ENCODE measurements at regions of chr5 and their contacts with region 1.

Region 1: GRCh38 chr5:142699184-142699720 is 13.4 kb upstream of the FGF1 start:
- DNase-seq: peak; percentile 87
- H3K4me3 ChIP-seq: no peak overlapping the region
- H3K27ac ChIP-seq: peak overlapping the region in 1 of 8 donors; percentile 9
- H3K4me1 ChIP-seq: peaks cover 8 to 35% (median 24%) of the 10 kb centered on the region in 6 donors
- H3K27me3 ChIP-seq: no peaks in the 10 kb centered on the region
- CTCF ChIP-seq: peak; percentile 80 to 95 (median 91)
- POLR2A ChIP-seq: no peak

Region 2: DNA sequence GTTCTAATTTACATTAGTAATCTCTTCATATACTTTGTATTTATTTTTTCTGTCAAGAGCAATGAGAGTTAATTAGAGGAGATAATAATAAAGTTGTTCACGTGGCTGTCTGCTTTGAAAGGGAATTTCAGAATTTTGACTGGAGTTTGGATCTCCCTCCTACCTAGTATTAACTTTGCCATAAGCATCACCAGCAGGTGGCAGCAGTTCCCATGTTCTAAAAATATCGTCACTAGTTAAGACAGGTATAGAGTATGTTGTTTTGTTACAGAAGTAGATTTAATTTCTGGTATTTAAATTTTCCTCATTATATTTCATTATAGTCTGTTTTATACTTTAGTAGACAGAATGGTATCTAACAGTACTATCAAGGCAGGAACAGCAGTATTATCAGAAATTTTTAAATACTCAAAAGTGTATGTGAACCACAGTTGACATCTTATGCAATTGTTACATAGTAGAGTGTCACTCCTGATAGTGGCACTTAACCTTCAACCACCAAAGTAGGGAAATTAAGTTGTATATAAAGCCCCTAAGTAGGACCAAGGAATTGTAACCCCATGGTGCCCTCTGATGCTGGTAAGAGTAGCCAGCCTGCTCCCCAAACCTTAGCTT is 706.8 kb before region 1 on chr5:
- intact Hi-C with region 1: loop called (anchors 10 kb)
- DNase-seq: no peak
- H3K4me3 ChIP-seq: no peak overlapping the region
- H3K27ac ChIP-seq: no peak overlapping the region
- H3K4me1 ChIP-seq: peaks cover 0 to 9% (median 0%) of the 10 kb centered on the region in 6 donors
- H3K27me3 ChIP-seq: no peaks in the 10 kb centered on the region
- CTCF ChIP-seq: peak; percentile 55 to 85 (median 74)
- POLR2A ChIP-seq: no peak

Region 3: DNA sequence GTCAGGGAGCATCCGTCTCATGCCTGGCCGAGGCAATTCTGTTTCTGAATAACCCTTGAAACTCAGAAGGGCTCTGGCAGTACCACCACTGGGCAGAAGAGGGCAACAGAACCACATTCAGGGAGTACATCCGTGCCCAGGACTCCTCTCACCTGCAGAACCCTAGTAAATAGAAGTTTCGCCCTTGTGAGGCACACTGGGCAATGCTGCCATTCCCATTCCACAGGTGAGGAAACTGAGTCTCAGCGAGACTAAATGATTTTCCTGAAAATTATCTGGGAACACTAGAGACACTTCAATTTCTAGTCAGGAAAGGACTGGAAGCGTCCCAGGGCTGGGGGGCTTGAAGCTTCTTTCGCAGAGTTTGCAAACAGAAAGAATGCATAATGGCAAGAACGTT is 88.1 kb before region 1 on chr5:
- intact Hi-C with region 1: loop called (anchors 5 kb)
- DNase-seq: no peak
- H3K4me3 ChIP-seq: no peak overlapping the region
- H3K27ac ChIP-seq: no peak overlapping the region
- H3K4me1 ChIP-seq: peaks cover 0 to 7% (median 0%) of the 10 kb centered on the region in 6 donors
- H3K27me3 ChIP-seq: peaks cover 0 to 17% (median 0%) of the 10 kb centered on the region in 7 donors
- CTCF ChIP-seq: peak; percentile 55 to 86 (median 77)
- POLR2A ChIP-seq: no peak

Region 4: DNA sequence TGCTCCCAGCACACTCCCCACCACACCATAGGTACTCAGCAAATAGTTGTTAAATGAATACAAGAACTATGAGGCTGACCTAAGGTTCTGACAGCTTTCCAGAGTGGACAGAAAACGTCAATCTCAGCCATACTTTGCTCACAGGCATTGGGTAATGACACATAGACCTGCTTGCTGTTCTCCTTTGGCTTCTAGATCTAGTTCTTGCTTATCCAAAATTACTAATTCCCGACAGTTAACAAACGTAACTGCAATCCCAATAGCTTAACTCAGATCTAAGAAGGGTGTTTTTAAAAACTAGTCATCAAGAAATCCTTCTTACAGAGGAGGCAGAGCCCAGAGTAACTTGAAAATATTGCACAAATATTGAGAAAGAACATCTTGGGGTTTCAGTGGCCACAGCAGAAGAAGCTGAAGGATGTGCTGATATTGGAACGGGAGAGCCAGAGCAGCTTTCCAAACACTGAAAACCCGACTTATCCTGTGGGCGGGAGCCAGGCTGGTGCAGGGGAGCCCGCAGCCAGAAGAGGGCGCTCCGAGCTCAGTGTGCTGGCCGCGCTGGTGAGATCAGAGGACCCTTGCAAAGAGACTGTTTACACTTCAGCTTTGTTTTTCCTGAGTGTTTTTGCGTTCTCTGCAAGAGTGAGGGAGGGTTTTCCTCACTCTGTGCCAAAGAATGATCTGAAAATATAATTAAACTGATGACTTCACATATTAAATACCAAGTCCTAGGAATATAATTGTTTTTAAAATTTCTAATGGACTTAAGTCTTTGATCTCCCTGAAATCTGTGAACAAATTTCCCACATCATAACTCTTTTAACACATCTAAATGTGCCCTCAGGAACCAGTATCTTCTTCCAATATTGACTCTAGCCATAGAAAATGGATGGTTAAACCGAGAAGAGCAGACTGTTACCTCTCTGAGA is 43.6 kb before region 1 on chr5:
- intact Hi-C with region 1: loop called (anchors 5 kb)
- DNase-seq: peak; percentile 89
- H3K4me3 ChIP-seq: no peak overlapping the region
- H3K27ac ChIP-seq: no peak overlapping the region
- H3K4me1 ChIP-seq: peaks cover 0 to 8% (median 3%) of the 10 kb centered on the region in 6 donors
- H3K27me3 ChIP-seq: peaks cover 0 to 11% (median 0%) of the 10 kb centered on the region in 7 donors
- CTCF ChIP-seq: peak; percentile 74 to 98 (median 93)
- POLR2A ChIP-seq: no peak

Measured in spleen (tissue), 13 donors.